ENCODE measurements at regions of chr3 and their contacts with region 1.

Region 1: DNA sequence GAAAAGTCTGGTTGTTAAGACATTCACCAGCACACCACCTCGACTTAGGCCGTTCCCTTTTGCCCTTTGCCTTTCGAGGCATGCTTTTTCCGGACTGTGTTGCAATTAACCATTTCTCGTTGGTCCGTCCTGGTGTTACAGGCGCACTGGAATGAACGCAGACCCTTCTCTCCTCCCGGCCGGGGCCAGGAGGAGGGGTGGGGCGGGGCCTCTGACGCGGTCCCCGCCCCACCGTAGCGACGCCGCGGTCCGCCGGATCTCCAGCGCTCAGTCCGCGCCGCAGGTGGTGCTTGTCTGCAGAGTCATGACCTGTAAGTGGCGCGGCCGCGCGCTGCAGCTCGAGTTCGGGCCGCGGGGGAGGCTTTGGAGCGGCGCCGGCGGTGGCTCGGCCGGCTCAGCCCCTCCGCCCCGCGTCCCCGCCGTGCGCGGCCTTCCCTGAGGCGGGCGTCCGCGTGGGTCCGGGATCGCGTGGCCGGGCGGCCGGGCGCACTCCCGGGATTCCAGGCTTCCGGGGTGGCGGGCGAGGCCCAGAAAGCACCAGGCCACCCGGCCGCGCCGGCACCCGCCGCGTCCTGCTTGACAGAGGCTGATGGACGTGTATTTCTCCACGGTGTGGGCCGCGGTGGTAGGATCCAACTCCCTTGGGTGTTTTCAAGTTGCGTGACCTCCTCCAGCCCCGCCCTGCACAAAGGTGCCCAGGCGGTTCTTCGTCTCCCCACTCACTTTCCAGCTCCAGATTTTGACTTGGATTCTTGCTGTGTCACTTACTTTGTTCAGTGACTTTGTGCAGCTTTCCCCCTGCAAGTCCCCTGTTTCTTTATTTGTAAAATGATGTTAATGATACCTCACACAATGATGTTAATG is at the start of gene NIT2:
- DNase-seq: peak; percentile 96
- H3K4me3 ChIP-seq: peak within 1 kb of the TSS; percentile 66 to 79
- H3K27ac ChIP-seq: peak within 1 kb of the TSS; percentile 23 to 62; a peak in 2 of 4 replicates
- H3K4me1 ChIP-seq: peaks cover 0 to 11% of the 10 kb centered on the region in 2 experiments; a peak in 1 of 4 replicates
- H3K27me3 ChIP-seq: no peaks in the 10 kb centered on the region
- CTCF ChIP-seq: no peak
- EP300 ChIP-seq: no peak
- RAD21 ChIP-seq: no peak
- polyA plus RNA-seq, gene NIT2: 28.6 and 41.4 TPM in 2 replicates

Region 2: GRCh38 chr3:100316641-100317069 is 18.1 kb before region 1 on chr3:
- CTCF ChIA-PET with region 1: interaction called, 18 read pairs
- POLR2A ChIA-PET with region 1: no interaction called
- DNase-seq: peak; percentile 45
- H3K4me3 ChIP-seq: no peak overlapping the region
- H3K27ac ChIP-seq: no peak overlapping the region
- H3K4me1 ChIP-seq: peaks cover 0 to 2% of the 10 kb centered on the region in 2 experiments; a peak in 1 of 4 replicates
- H3K27me3 ChIP-seq: no peaks in the 10 kb centered on the region
- CTCF ChIP-seq: peak; percentile 73
- EP300 ChIP-seq: no peak
- RAD21 ChIP-seq: peak; percentile 73

Region 3: GRCh38 chr3:100653604-100654294 is 319.0 kb after region 1 on chr3:
- CTCF ChIA-PET with region 1: no interaction called
- POLR2A ChIA-PET with region 1: no interaction called
- DNase-seq: no peak
- H3K4me3 ChIP-seq: no peak overlapping the region
- H3K27ac ChIP-seq: no peak overlapping the region
- H3K4me1 ChIP-seq: no peaks in the 10 kb centered on the region; a peak in 1 of 4 replicates
- H3K27me3 ChIP-seq: no peaks in the 10 kb centered on the region
- CTCF ChIP-seq: no peak
- EP300 ChIP-seq: no peak
- RAD21 ChIP-seq: no peak